Endothelial cell of umbilical vein (primary cell): ENCODE measurements at regions of chr17 and their contacts with region 1.

Region 1: DNA sequence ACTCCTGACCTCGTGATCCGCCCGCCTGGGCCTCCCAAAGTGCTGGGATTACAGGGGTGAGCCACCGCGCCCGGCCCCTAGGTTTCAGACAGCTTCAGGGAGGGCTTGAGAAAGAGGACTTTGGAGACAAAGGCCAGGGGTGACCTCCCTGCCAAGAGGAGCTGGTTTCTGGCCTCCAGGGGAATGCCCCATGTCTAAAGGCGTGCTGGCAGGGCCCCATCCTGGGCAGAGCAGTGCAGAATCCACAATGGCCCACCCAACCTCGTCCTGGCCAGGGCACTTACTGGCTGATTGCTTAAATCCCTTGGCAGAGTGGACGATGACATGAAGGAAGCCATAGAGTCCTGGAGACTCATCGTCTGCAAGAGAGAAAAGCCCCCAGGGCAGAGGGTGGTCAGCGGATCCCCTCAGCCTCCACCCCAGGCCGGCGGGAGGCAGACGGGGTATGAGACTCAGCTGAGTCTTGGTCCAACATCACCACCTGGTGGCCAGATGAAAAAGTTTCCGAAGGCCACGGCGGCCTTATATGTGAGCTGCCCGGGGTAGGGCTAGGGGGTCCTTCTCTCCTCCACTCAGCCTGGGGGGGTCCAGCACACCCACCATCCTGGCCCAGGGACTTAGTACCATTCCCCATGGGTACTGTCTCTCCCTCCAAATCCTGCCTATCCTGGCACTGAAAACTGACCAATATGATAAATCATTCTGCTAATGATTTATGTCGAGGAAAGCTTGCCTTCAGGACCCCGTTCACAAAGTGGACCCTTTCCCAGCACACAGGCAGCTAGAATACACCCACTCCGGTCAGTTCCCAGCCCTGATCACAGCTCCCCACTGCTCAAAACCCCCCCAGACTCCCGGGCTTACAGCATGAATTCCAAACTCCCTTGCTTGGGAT is 59.1 kb downstream of the TIMM22 start:
- DNase-seq: peak; percentile 66
- H3K4me3 ChIP-seq: no peak overlapping the region
- H3K27ac ChIP-seq: no peak overlapping the region
- H3K4me1 ChIP-seq: no peaks in the 10 kb centered on the region
- H3K27me3 ChIP-seq: no peaks in the 10 kb centered on the region
- CTCF ChIP-seq: peak; percentile 58 to 81
- POLR2A ChIP-seq: no peak

Region 2: GRCh38 chr17:781805-782731 is 273.9 kb before region 1 on chr17 and contains the starts of genes GLOD4 and MRM3:
- CTCF ChIA-PET with region 1: interaction called, 14 read pairs
- POLR2A ChIA-PET with region 1: no interaction called
- dilution Hi-C with region 1: no loop called
- intact Hi-C with region 1: no loop called
- DNase-seq: peak; percentile 92
- H3K4me3 ChIP-seq: peak within 1 kb of the TSS; percentile 66 to 91 (median 83)
- H3K27ac ChIP-seq: peak within 1 kb of the TSS; percentile 29
- H3K4me1 ChIP-seq: peaks cover 18% of the 10 kb centered on the region
- H3K27me3 ChIP-seq: no peaks in the 10 kb centered on the region
- CTCF ChIP-seq: no peak
- POLR2A ChIP-seq: peak; percentile 92
- total RNA-seq, gene GLOD4: 81.8 and 84.2 TPM in 2 replicates
- total RNA-seq, gene MRM3: 19.0 and 19.2 TPM in 2 replicates

Region 3: DNA sequence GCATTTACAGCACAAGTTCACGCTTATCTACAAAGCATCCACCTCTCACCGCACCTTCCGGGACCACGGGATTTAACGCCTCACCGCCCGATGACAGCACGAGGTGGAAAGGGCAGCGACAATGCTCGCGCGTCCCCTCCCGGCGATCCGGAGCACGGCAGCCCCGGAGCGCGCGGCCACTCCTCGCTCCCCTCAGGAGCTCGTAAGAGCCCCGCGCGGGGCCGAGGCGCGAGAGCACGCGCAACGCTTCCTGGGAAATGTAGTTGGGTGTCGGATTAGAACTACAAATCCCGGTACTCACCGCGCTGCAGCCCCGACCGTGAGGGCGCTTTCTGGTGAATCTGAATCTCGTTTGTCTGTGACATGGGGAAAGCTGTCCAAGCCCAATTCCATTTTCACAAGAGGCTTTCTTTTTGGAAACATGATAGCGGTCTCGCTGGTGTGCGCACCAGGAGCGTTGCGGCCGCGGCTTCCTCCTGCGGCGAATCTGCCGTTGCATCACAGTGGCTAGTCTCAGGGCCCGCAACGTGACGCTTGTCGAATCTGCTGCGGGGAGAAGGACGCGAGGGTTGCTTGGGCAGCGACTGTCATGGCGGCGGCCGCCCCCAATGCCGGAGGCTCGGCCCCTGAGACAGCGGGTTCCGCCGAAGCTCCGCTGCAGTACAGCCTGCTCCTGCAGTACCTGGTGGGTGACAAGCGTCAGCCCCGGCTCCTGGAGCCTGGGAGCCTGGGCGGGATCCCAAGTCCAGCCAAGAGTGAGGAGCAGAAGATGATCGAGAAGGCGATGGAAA is 59.2 kb before region 1 on chr17 and contains the start of gene TIMM22:
- CTCF ChIA-PET with region 1: interaction called, 265 read pairs
- POLR2A ChIA-PET with region 1: no interaction called
- dilution Hi-C with region 1: no loop called
- intact Hi-C with region 1: loop called (anchors 1 kb)
- DNase-seq: peak; percentile 98
- H3K4me3 ChIP-seq: peak within 1 kb of the TSS; percentile 77 to 97 (median 86)
- H3K27ac ChIP-seq: peak within 1 kb of the TSS; percentile 86
- H3K4me1 ChIP-seq: peaks cover 29% of the 10 kb centered on the region
- H3K27me3 ChIP-seq: no peaks in the 10 kb centered on the region
- CTCF ChIP-seq: peak; percentile 94 to 97
- POLR2A ChIP-seq: peak; percentile 81
- total RNA-seq, gene TIMM22: 19.5 and 19.6 TPM in 2 replicates

Region 4: GRCh38 chr17:1095090-1095852 is 39.3 kb after region 1 on chr17:
- CTCF ChIA-PET with region 1: interaction called, 15 read pairs
- POLR2A ChIA-PET with region 1: no interaction called
- dilution Hi-C with region 1: no loop called
- intact Hi-C with region 1: no loop called
- DNase-seq: no peak
- H3K4me3 ChIP-seq: no peak overlapping the region
- H3K27ac ChIP-seq: no peak overlapping the region
- H3K4me1 ChIP-seq: no peaks in the 10 kb centered on the region
- H3K27me3 ChIP-seq: no peaks in the 10 kb centered on the region
- CTCF ChIP-seq: no peak
- POLR2A ChIP-seq: no peak

Region 5: DNA sequence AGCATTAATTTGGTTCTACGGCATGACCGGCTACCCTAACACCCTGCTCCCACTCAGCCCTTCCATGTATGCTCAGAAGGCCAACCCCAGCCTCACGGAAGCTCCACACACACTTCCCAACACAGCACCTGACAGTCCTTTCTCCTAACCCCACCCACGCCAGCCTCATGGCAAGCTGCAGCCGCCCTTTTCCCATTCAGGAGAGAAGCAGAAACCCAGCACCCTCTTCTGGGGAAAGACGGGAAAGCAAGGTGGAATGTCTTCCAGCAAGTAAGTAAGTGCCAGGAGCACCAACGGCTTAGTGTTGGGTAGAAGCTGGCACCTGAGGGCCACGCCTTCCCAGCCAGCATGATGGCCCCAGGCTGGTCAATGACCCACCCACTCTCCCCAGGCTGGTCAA is 91.7 kb after region 1 on chr17:
- CTCF ChIA-PET with region 1: interaction called, 234 read pairs
- POLR2A ChIA-PET with region 1: no interaction called
- dilution Hi-C with region 1: no loop called
- intact Hi-C with region 1: loop called (anchors 1 kb)
- DNase-seq: peak; percentile 80
- H3K4me3 ChIP-seq: no peak overlapping the region
- H3K27ac ChIP-seq: no peak overlapping the region
- H3K4me1 ChIP-seq: no peaks in the 10 kb centered on the region
- H3K27me3 ChIP-seq: no peaks in the 10 kb centered on the region
- CTCF ChIP-seq: peak; percentile 48 to 72
- POLR2A ChIP-seq: no peak

Region 6: GRCh38 chr17:1186923-1187771 is 131.1 kb after region 1 on chr17:
- CTCF ChIA-PET with region 1: interaction called, 260 read pairs
- POLR2A ChIA-PET with region 1: no interaction called
- dilution Hi-C with region 1: no loop called
- intact Hi-C with region 1: loop called (anchors 1 kb)
- DNase-seq: peak; percentile 84
- H3K4me3 ChIP-seq: no peak overlapping the region
- H3K27ac ChIP-seq: no peak overlapping the region
- H3K4me1 ChIP-seq: peaks cover 3% of the 10 kb centered on the region
- H3K27me3 ChIP-seq: peaks cover 6 to 9% of the 10 kb centered on the region in 2 experiments
- CTCF ChIP-seq: peak; percentile 99 to 100
- POLR2A ChIP-seq: no peak